CD4-positive, alpha-beta T cell (primary cell): ENCODE measurements at regions of chr2 and their contacts with region 1.

Region 1: DNA sequence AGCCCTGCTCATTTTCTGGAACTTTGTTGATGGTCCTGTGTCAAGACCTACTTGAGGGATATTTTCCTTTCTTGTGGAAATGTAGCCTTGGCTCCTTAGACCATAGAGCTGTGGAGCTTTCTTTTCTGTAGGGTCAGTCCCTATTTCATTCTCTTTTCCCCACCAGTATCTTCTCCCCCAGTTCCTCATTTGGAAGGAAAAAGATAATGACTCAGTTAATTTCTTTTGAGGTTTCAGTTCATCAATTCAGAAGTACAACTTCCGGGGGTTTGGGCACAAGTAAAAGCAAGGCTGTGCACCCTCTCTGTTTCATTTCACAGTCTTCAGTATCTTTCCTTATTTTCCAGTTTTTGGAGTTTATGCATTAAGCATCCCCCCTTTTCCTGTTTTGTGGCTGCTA is 70.7 kb downstream of the CDC42EP3 start:
- DNase-seq: peak in 2 of 14 experiments; percentile 51 to 54
- ATAC-seq: no peak
- H3K4me3 ChIP-seq: peak overlapping the region; percentile 65
- H3K4me3 Mint-ChIP-seq: peak overlapping the region; percentile 90
- H3K27ac ChIP-seq: peak overlapping the region; percentile 70 to 87
- H3K27ac Mint-ChIP-seq: peak overlapping the region; percentile 98
- H3K4me1 ChIP-seq: peaks cover 17% of the 10 kb centered on the region
- H3K4me1 Mint-ChIP-seq: peaks cover 52% of the 10 kb centered on the region
- H3K27me3 ChIP-seq: no peaks in the 10 kb centered on the region
- H3K27me3 Mint-ChIP-seq: no peaks in the 10 kb centered on the region
- CTCF ChIP-seq: no peak

Region 2: GRCh38 chr2:37523814-37524362 is 76.8 kb before region 1 on chr2:
- CTCF ChIA-PET with region 1: no interaction called
- POLR2A ChIA-PET with region 1: no interaction called
- intact Hi-C with region 1: no loop called
- DNase-seq: peak in 1 of 14 experiments; percentile 11
- ATAC-seq: no peak
- H3K4me3 ChIP-seq: no peak overlapping the region
- H3K4me3 Mint-ChIP-seq: no peak overlapping the region
- H3K27ac ChIP-seq: no peak overlapping the region
- H3K27ac Mint-ChIP-seq: no peak overlapping the region
- H3K4me1 ChIP-seq: no peaks in the 10 kb centered on the region
- H3K4me1 Mint-ChIP-seq: no peaks in the 10 kb centered on the region
- H3K27me3 ChIP-seq: no peaks in the 10 kb centered on the region
- H3K27me3 Mint-ChIP-seq: peaks cover 4% of the 10 kb centered on the region
- CTCF ChIP-seq: no peak

Region 3: DNA sequence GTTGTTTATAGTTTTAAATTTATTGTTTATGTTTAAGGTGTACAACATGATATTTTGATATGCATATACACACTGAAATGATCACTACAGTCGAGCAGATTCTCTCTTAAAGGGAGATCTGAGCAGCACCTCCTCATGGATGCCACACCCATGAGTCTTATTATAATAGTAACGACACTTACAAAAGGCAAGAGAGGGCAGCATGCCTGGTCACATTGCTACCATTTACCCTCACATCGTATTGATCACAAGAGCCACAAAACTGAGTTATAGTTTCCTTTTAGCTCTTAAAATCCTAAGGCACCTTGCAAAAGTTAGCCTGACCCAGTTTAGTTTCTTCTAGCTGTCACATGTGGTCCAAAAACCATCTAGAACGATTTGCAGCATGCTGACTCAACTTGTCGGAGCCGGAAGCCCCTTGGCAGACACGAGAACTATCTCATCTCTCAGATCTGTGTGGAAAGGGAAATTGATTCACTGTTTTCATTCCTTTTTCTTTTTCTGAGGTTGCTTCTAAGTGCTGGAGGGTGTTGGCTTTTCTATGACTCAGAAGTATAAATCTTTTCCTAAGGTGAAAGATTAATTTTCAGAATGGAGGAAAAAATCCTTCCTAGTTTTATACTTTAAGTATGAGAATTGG is 14.6 kb before region 1 on chr2:
- CTCF ChIA-PET with region 1: interaction called, 27 read pairs
- POLR2A ChIA-PET with region 1: interaction called, 121 read pairs
- intact Hi-C with region 1: loop called (anchors 1 to 2 kb)
- DNase-seq: peak; percentile 38 to 92 (median 67)
- ATAC-seq: peak; percentile 85
- H3K4me3 ChIP-seq: peak overlapping the region; percentile 6
- H3K4me3 Mint-ChIP-seq: peak overlapping the region; percentile 63
- H3K27ac ChIP-seq: peak overlapping the region; percentile 65 to 67
- H3K27ac Mint-ChIP-seq: peak overlapping the region; percentile 86
- H3K4me1 ChIP-seq: peaks cover 62% of the 10 kb centered on the region
- H3K4me1 Mint-ChIP-seq: peaks cover 89% of the 10 kb centered on the region
- H3K27me3 ChIP-seq: no peaks in the 10 kb centered on the region
- H3K27me3 Mint-ChIP-seq: no peaks in the 10 kb centered on the region
- CTCF ChIP-seq: no peak

Region 4: GRCh38 chr2:37615804-37616676 is 15.3 kb after region 1 on chr2:
- CTCF ChIA-PET with region 1: no interaction called
- POLR2A ChIA-PET with region 1: interaction called, 77 read pairs
- intact Hi-C with region 1: loop called in 1 of 2 experiments (anchors 1 kb)
- DNase-seq: peak; percentile 48 to 92 (median 66)
- ATAC-seq: peak; percentile 96
- H3K4me3 ChIP-seq: no peak overlapping the region
- H3K4me3 Mint-ChIP-seq: peak overlapping the region; percentile 32
- H3K27ac ChIP-seq: peak overlapping the region; percentile 48 to 74
- H3K27ac Mint-ChIP-seq: peak overlapping the region; percentile 79
- H3K4me1 ChIP-seq: peaks cover 52% of the 10 kb centered on the region
- H3K4me1 Mint-ChIP-seq: peaks cover 65% of the 10 kb centered on the region
- H3K27me3 ChIP-seq: no peaks in the 10 kb centered on the region
- H3K27me3 Mint-ChIP-seq: no peaks in the 10 kb centered on the region
- CTCF ChIP-seq: no peak

Region 5: GRCh38 chr2:37623971-37624900 is 23.5 kb after region 1 on chr2:
- CTCF ChIA-PET with region 1: interaction called, 17 read pairs
- POLR2A ChIA-PET with region 1: interaction called, 77 read pairs
- intact Hi-C with region 1: no loop called
- DNase-seq: peak in 4 of 14 experiments; percentile 34 to 69 (median 62)
- ATAC-seq: peak; percentile 35
- H3K4me3 ChIP-seq: no peak overlapping the region
- H3K4me3 Mint-ChIP-seq: peak overlapping the region; percentile 61
- H3K27ac ChIP-seq: peak overlapping the region; percentile 0 to 71
- H3K27ac Mint-ChIP-seq: peak overlapping the region; percentile 85
- H3K4me1 ChIP-seq: peaks cover 59% of the 10 kb centered on the region
- H3K4me1 Mint-ChIP-seq: peaks cover 70% of the 10 kb centered on the region
- H3K27me3 ChIP-seq: no peaks in the 10 kb centered on the region
- H3K27me3 Mint-ChIP-seq: no peaks in the 10 kb centered on the region
- CTCF ChIP-seq: no peak

Region 6: GRCh38 chr2:37635504-37636380 is 35.0 kb after region 1 on chr2:
- CTCF ChIA-PET with region 1: no interaction called
- POLR2A ChIA-PET with region 1: interaction called, 7 read pairs
- intact Hi-C with region 1: loop called in 1 of 2 experiments (anchors 1 kb)
- DNase-seq: peak; percentile 24 to 93 (median 53)
- ATAC-seq: peak; percentile 89
- H3K4me3 ChIP-seq: no peak overlapping the region
- H3K4me3 Mint-ChIP-seq: peak overlapping the region; percentile 8
- H3K27ac ChIP-seq: peak overlapping the region; percentile 70 to 75
- H3K27ac Mint-ChIP-seq: peak overlapping the region; percentile 88
- H3K4me1 ChIP-seq: peaks cover 47% of the 10 kb centered on the region
- H3K4me1 Mint-ChIP-seq: peaks cover 76% of the 10 kb centered on the region
- H3K27me3 ChIP-seq: no peaks in the 10 kb centered on the region
- H3K27me3 Mint-ChIP-seq: no peaks in the 10 kb centered on the region
- CTCF ChIP-seq: no peak

Region 7: DNA sequence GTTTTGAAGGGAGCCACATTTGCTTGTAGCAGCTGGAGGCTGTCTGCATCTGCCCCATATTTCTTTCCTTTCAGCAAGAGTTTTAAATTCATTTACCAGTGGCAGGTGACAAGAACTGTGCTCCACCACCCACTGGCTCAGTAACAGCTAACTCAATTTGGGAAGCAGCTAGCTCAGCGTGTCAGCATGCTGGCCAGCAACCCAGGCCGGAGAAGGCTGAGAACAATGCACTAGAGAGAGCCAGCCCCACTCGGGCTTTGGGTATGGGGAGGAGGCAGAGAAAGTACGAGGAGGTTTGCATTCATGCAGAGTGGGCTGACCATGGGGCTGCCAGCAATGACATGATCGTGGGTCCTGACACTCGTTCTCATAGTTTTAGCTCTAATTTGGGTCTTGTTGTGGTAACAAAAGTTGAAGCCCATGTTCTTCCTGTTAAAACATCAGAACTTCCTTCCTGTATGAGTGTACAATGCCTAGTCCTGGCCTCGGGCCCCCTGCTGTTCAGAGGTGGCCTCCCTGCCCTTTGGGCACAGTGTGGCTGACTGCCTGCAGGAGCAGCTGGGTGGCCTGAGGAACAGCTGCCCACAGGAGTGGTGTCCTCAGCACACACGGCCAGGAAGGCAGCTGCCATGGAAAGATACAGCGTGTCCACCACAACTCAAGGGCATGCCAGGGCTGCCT is 47.7 kb after region 1 on chr2:
- CTCF ChIA-PET with region 1: interaction called, 3 read pairs
- POLR2A ChIA-PET with region 1: interaction called, 30 read pairs
- intact Hi-C with region 1: no loop called
- DNase-seq: peak in 13 of 14 experiments; percentile 17 to 77 (median 43)
- ATAC-seq: peak; percentile 67
- H3K4me3 ChIP-seq: peak overlapping the region; percentile 4
- H3K4me3 Mint-ChIP-seq: peak overlapping the region; percentile 44
- H3K27ac ChIP-seq: peak overlapping the region; percentile 24 to 64
- H3K27ac Mint-ChIP-seq: peak overlapping the region; percentile 79
- H3K4me1 ChIP-seq: peaks cover 82% of the 10 kb centered on the region
- H3K4me1 Mint-ChIP-seq: peaks cover 91% of the 10 kb centered on the region
- H3K27me3 ChIP-seq: no peaks in the 10 kb centered on the region
- H3K27me3 Mint-ChIP-seq: no peaks in the 10 kb centered on the region
- CTCF ChIP-seq: peak; percentile 19

Region 8: GRCh38 chr2:37653805-37654378 is 53.2 kb after region 1 on chr2:
- CTCF ChIA-PET with region 1: interaction called, 3 read pairs
- POLR2A ChIA-PET with region 1: interaction called, 30 read pairs
- intact Hi-C with region 1: no loop called
- DNase-seq: peak in 3 of 14 experiments; percentile 49 to 77 (median 72)
- ATAC-seq: peak; percentile 17
- H3K4me3 ChIP-seq: no peak overlapping the region
- H3K4me3 Mint-ChIP-seq: peak overlapping the region; percentile 71
- H3K27ac ChIP-seq: peak overlapping the region in 1 of 2 donors; percentile 55
- H3K27ac Mint-ChIP-seq: peak overlapping the region; percentile 81
- H3K4me1 ChIP-seq: peaks cover 89% of the 10 kb centered on the region
- H3K4me1 Mint-ChIP-seq: peaks cover 93% of the 10 kb centered on the region
- H3K27me3 ChIP-seq: no peaks in the 10 kb centered on the region
- H3K27me3 Mint-ChIP-seq: no peaks in the 10 kb centered on the region
- CTCF ChIP-seq: no peak

Region 9: GRCh38 chr2:37720533-37721200 is 119.9 kb after region 1 on chr2:
- CTCF ChIA-PET with region 1: no interaction called
- POLR2A ChIA-PET with region 1: no interaction called
- intact Hi-C with region 1: no loop called
- DNase-seq: no peak
- ATAC-seq: no peak
- H3K4me3 ChIP-seq: no peak overlapping the region
- H3K4me3 Mint-ChIP-seq: no peak overlapping the region
- H3K27ac ChIP-seq: no peak overlapping the region
- H3K27ac Mint-ChIP-seq: no peak overlapping the region
- H3K4me1 ChIP-seq: no peaks in the 10 kb centered on the region
- H3K4me1 Mint-ChIP-seq: peaks cover 5% of the 10 kb centered on the region
- H3K27me3 ChIP-seq: no peaks in the 10 kb centered on the region
- H3K27me3 Mint-ChIP-seq: peaks cover 4% of the 10 kb centered on the region
- CTCF ChIP-seq: no peak